ENCODE measurements at regions of chr3 and their contacts with region 1.

Region 1: DNA sequence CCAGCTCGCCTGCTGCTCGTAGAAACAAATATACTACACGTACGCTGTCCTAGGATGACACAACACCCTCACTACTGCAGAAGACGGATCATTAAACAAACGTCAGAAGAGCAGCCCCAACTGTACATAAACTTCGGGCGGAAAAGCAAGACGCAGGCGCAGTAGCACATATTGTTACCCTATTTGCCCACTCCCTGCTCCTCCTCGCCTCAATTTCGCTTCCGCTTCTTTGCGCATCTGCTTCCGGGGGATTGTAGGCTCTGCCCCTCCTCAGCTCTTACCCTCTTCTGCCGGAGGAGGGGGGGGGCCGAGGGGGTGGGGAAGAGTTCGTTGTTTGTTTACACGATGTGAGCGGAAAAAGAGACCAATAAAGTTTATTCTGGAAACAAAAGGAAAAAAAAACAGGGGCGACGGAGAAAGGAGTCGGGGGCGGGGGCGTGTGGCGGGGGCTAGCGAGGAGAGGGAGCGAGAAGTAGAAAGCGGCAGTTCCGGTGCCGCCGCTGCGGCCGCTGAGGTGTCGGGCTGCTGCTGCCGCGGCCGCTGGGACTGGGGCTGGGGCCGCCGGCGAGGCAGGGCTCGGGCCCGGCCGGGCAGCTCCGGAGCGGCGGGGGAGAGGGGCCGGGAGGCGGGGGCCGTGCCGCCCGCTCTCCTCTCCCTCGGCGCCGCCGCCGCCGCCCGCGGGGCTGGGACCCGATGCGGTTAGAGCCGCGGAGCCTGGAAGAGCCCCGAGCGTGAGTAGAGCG is at the start of gene PIK3CA:
- DNase-seq: peak; percentile 93
- H3K4me3 Mint-ChIP-seq: peak within 1 kb of the TSS; percentile 97
- H3K27ac Mint-ChIP-seq: peak within 1 kb of the TSS; percentile 94
- H3K4me1 Mint-ChIP-seq: peaks cover 23% of the 10 kb centered on the region
- H3K27me3 Mint-ChIP-seq: peaks cover 25% of the 10 kb centered on the region
- total RNA-seq, gene PIK3CA: 16.3 and 19.6 TPM in 2 replicates

Region 2: DNA sequence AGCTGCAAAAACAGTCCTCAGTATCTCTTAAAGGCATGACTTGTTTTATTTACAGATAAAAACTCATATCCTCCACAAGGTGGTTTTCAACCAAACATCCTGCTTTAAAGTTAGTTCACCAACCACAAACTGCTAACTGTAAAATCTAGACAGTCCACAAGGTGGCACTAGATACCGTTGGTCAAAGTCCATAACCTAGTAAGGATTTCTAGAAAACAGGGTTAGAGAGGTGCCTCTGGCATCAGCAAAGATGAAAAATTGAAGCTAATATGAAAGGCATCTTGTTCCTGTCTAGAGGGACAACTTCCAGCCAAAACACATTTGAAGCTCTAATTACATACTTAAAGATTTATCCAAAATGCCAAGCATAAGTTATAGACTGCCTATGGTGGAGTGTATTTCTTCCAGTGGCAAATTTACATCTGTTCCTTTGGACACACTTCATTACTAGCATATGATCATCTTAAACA is 132.5 kb before region 1 on chr3:
- intact Hi-C with region 1: loop called (anchors 1 kb)
- DNase-seq: peak; percentile 62
- H3K4me3 Mint-ChIP-seq: no peak overlapping the region
- H3K27ac Mint-ChIP-seq: peak overlapping the region; percentile 2
- H3K4me1 Mint-ChIP-seq: peaks cover 35% of the 10 kb centered on the region
- H3K27me3 Mint-ChIP-seq: peaks cover 17% of the 10 kb centered on the region

Region 3: DNA sequence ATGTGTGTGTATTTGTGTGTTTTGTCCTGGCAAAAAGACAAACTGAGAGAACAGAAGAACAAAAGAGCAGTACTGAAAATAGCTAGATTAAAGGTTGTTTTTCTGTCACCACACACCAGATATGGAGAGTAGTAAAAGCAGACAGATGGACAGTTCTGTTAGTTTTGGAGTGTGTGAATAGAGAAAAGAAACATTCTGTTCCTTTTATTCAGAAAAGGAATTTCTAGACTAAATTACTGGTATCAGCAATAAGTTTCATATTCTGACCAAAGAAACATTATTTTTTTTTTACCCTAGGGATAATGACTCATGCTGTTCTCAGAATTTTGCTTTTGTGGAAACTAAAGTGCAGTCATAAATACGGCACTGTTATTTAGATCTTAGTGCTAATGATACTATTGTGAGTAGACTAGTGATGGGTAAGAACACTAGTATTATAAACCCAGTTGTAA is 33.0 kb after region 1 on chr3:
- intact Hi-C with region 1: loop called (anchors 1 kb)
- DNase-seq: no peak
- H3K4me3 Mint-ChIP-seq: no peak overlapping the region
- H3K27ac Mint-ChIP-seq: no peak overlapping the region
- H3K4me1 Mint-ChIP-seq: peaks cover 14% of the 10 kb centered on the region
- H3K27me3 Mint-ChIP-seq: peaks cover 2% of the 10 kb centered on the region

Region 4: GRCh38 chr3:179260949-179261765 is 113.1 kb after region 1 on chr3:
- intact Hi-C with region 1: loop called (anchors 1 kb)
- DNase-seq: peak; percentile 67
- H3K4me3 Mint-ChIP-seq: peak overlapping the region; percentile 66
- H3K27ac Mint-ChIP-seq: no peak overlapping the region
- H3K4me1 Mint-ChIP-seq: peaks cover 28% of the 10 kb centered on the region
- H3K27me3 Mint-ChIP-seq: peaks cover 12% of the 10 kb centered on the region

Region 5: GRCh38 chr3:179451265-179452175 is 303.5 kb after region 1 on chr3 and contains the start of gene GNB4:
- intact Hi-C with region 1: loop called (anchors 2 kb)
- DNase-seq: peak; percentile 54
- H3K4me3 Mint-ChIP-seq: peak within 1 kb of the TSS; percentile 83
- H3K27ac Mint-ChIP-seq: peak within 1 kb of the TSS; percentile 85
- H3K4me1 Mint-ChIP-seq: peaks cover 25% of the 10 kb centered on the region
- H3K27me3 Mint-ChIP-seq: peaks cover 77% of the 10 kb centered on the region
- total RNA-seq, gene GNB4: 12.0 and 13.9 TPM in 2 replicates

Region 6: GRCh38 chr3:179653096-179653797 is 505.2 kb after region 1 on chr3:
- intact Hi-C with region 1: loop called (anchors 5 kb)
- DNase-seq: peak; percentile 58
- H3K4me3 Mint-ChIP-seq: peak overlapping the region; percentile 94
- H3K27ac Mint-ChIP-seq: peak overlapping the region; percentile 83
- H3K4me1 Mint-ChIP-seq: peaks cover 26% of the 10 kb centered on the region
- H3K27me3 Mint-ChIP-seq: peaks cover 10% of the 10 kb centered on the region

Measured in activated T-helper 2 cell treated with anti-CD3 and anti-CD28 coated beads, Interferon-gamma antibody, Interleukin-2, Interleukin-4, amounts not matched to agents 10 μg/mL and 5 μg/mL and 100 μg/mL, durations not matched to agents 14 hours and 24 hours and 36 hours (primary cell).